ENCODE measurements at regions of chr14 and their contacts with region 1.

Region 1: DNA sequence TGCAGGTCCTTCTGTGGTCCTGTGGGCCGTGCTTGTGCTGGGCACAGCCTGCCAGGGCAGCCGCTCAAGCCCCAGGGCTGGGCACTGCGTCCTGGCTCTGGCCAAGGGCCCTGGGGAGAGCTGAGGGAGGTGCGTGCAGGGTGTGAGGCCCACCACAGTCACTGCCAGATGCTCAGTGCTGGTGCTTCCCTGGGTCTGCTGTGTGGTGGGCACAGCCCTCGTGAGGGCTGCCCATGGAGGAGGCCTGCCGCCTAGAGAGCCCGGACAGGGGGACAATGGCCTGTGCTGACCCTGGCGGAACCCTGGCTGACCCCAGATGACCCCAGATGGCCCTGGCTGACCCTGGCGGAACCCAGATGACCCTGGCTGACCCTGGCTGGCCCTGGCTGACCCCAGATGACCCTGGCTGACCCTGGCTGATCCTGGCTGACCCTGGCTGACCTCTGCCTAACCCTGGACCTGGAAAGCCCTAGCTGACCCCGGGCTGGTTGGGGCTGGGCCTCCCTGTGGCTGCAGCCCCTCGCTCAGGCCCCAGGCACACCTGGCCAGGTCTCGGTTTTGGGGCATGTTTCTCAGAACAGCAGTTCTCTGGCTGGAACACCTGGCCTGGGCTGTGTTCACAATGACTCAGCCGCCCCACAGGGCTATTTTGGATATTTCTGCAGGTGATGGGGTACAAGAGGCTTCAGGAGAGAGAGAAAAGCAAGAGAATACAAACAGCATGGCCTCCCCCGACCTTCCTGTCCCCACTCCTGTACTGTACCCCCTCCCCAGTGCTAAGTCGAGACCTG is 55.4 kb downstream of the TMEM121 start:
- DNase-seq: peak in 2 of 4 donors; percentile 29 to 56
- ATAC-seq: no peak
- H3K4me3 ChIP-seq: no peak overlapping the region
- H3K27ac ChIP-seq: no peak overlapping the region
- H3K4me1 ChIP-seq: no peaks in the 10 kb centered on the region
- H3K27me3 ChIP-seq: no peaks in the 10 kb centered on the region
- CTCF ChIP-seq: no peak

Region 2: DNA sequence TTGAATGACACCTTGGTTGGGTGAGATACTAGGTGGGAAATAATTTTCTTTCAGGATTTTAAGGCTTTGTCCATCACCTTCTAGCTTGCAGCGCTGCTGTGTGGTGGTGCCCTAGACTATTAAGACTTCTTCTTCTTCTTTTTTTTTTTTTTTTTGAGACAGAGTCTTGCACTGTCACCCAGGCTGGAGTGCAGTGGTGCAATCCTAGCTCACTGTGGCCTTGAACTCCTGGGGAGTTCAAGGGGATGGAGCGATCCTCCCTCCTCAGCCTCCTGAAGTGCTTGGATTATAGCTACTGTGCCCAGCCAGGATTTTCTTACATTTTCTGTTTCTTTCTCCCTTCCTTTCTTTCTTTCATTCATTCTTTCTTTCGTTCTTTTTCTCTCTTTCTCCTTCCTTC is 172.4 kb before region 1 on chr14:
- intact Hi-C with region 1: no loop called
- DNase-seq: no peak
- ATAC-seq: no peak
- H3K4me3 ChIP-seq: no peak overlapping the region
- H3K27ac ChIP-seq: no peak overlapping the region
- H3K4me1 ChIP-seq: peaks cover 4 to 19% of the 10 kb centered on the region in 2 donors
- H3K27me3 ChIP-seq: peaks cover 14 to 51% of the 10 kb centered on the region in 2 donors
- CTCF ChIP-seq: no peak

Region 3: GRCh38 chr14:105700622-105701288 is 119.0 kb after region 1 on chr14:
- intact Hi-C with region 1: loop called in 1 of 2 experiments (anchors 10 kb)
- DNase-seq: peak in 1 of 4 donors; percentile 21
- ATAC-seq: peak; percentile 39
- H3K4me3 ChIP-seq: no peak overlapping the region
- H3K27ac ChIP-seq: no peak overlapping the region
- H3K4me1 ChIP-seq: no peaks in the 10 kb centered on the region
- H3K27me3 ChIP-seq: peaks cover 0 to under 1% of the 10 kb centered on the region in 2 donors
- CTCF ChIP-seq: no peak